ENCODE measurements at regions of chr7 and their contacts with region 1.

Region 1: GRCh38 chr7:79298145-79298760 is 155.2 kb downstream of the MAGI2 start:
- DNase-seq: no peak
- H3K4me3 ChIP-seq: no peak overlapping the region
- H3K27ac ChIP-seq: no peak overlapping the region
- H3K4me1 ChIP-seq: peaks cover 0 to 4% (median 0%) of the 10 kb centered on the region in 4 donors
- H3K27me3 ChIP-seq: no peaks in the 10 kb centered on the region
- CTCF ChIP-seq: peak; percentile 49 to 74 (median 69)
- EP300 ChIP-seq: no peak
- POLR2A ChIP-seq: no peak

Region 2: DNA sequence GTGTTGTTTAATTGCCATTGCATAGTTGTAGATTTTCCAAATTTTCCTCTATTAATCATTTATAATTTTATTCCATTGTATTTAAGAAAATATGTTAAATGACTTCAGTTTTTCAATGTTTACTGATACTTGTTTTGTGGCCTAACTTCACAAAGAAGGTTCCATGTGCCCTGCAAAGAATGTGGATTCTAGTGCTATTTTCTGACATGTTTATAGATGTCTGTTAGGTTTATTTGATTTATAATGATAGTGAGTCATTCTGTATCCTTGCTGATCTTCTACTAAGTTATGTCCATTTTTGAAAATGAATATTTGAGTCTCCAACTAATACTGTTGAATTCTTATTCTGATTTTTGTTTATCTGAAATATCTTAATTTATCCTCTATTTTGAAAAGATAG is 213.8 kb before region 1 on chr7:
- in situ Hi-C with region 1: no loop called
- intact Hi-C with region 1: no loop called
- DNase-seq: no peak
- H3K4me3 ChIP-seq: no peak overlapping the region
- H3K27ac ChIP-seq: no peak overlapping the region
- H3K4me1 ChIP-seq: no peaks in the 10 kb centered on the region
- H3K27me3 ChIP-seq: no peaks in the 10 kb centered on the region
- CTCF ChIP-seq: no peak
- EP300 ChIP-seq: no peak
- POLR2A ChIP-seq: no peak

Region 3: GRCh38 chr7:80018941-80019752 is 720.9 kb after region 1 on chr7:
- in situ Hi-C with region 1: loop called in 2 of 4 experiments (anchors 25 kb)
- intact Hi-C with region 1: no loop called
- DNase-seq: peak; percentile 19
- H3K4me3 ChIP-seq: no peak overlapping the region
- H3K27ac ChIP-seq: no peak overlapping the region
- H3K4me1 ChIP-seq: no peaks in the 10 kb centered on the region
- H3K27me3 ChIP-seq: no peaks in the 10 kb centered on the region
- CTCF ChIP-seq: peak; percentile 66 to 83 (median 78)
- EP300 ChIP-seq: no peak
- POLR2A ChIP-seq: no peak

Region 4: GRCh38 chr7:80047856-80048459 is 749.7 kb after region 1 on chr7:
- in situ Hi-C with region 1: loop called in 1 of 4 experiments (anchors 25 kb)
- intact Hi-C with region 1: no loop called
- DNase-seq: no peak
- H3K4me3 ChIP-seq: no peak overlapping the region
- H3K27ac ChIP-seq: no peak overlapping the region
- H3K4me1 ChIP-seq: no peaks in the 10 kb centered on the region
- H3K27me3 ChIP-seq: no peaks in the 10 kb centered on the region
- CTCF ChIP-seq: no peak
- EP300 ChIP-seq: no peak
- POLR2A ChIP-seq: no peak